Naive thymus-derived CD4-positive, alpha-beta T cell (primary cell): ENCODE measurements at regions of chr3 and their contacts with region 1.

Region 1: GRCh38 chr3:112734718-112735350 is 93.9 kb upstream of the CCDC80 start:
- DNase-seq: peak; percentile 14 to 76 (median 60)
- ATAC-seq: peak; percentile 82
- H3K4me3 ChIP-seq: no peak overlapping the region
- H3K4me3 Mint-ChIP-seq: peak overlapping the region in 1 of 10 donors; percentile 7
- H3K27ac ChIP-seq: no peak overlapping the region
- H3K27ac Mint-ChIP-seq: peak overlapping the region in 4 of 9 donors; percentile 8 to 76 (median 24)
- H3K4me1 ChIP-seq: peaks cover 25 to 44% of the 10 kb centered on the region in 2 donors
- H3K4me1 Mint-ChIP-seq: peaks cover 23 to 50% (median 46%) of the 10 kb centered on the region in 7 donors
- H3K27me3 ChIP-seq: no peaks in the 10 kb centered on the region
- H3K27me3 Mint-ChIP-seq: no peaks in the 10 kb centered on the region

Region 2: GRCh38 chr3:112582244-112582874 is 152.5 kb before region 1 on chr3:
- CTCF ChIA-PET with region 1: no interaction called
- POLR2A ChIA-PET with region 1: no interaction called
- intact Hi-C with region 1: loop called in 1 of 2 experiments (anchors 5 kb)
- DNase-seq: peak in 5 of 9 donors; percentile 8 to 39 (median 22)
- ATAC-seq: peak; percentile 60
- H3K4me3 ChIP-seq: no peak overlapping the region
- H3K4me3 Mint-ChIP-seq: no peak overlapping the region
- H3K27ac ChIP-seq: no peak overlapping the region
- H3K27ac Mint-ChIP-seq: no peak overlapping the region
- H3K4me1 ChIP-seq: no peaks in the 10 kb centered on the region
- H3K4me1 Mint-ChIP-seq: peaks cover 0 to 4% (median under 1%) of the 10 kb centered on the region in 7 donors
- H3K27me3 ChIP-seq: no peaks in the 10 kb centered on the region
- H3K27me3 Mint-ChIP-seq: no peaks in the 10 kb centered on the region

Region 3: DNA sequence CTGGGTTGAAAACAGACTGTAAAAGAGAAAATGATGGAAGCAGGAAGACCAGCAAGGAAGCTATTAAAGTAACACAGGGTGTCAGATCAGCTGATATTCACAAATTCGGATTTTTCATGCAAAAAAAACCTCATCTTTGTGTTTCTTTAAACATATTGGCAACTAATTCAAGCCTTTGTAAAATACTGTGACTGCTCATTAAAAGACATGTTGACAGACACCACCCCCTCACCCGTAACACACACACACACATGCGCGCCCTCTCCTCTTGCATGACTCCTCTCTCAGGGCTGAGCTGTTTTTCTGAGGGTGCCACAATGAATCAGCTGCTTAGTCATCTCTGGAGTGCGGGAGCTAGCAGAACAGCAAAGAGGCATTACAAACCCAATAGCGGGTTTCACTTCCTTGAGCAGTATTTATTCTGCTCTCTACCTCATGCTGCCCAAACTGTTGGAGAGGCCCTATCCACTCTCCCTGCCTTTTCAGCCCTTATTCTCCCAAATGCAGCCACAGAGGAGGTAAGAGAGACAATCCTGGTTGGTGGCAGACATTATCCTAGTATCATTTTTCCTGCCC is 58.1 kb before region 1 on chr3:
- CTCF ChIA-PET with region 1: no interaction called
- POLR2A ChIA-PET with region 1: no interaction called
- intact Hi-C with region 1: loop called in 1 of 2 experiments (anchors 2 kb)
- DNase-seq: peak in 7 of 9 donors; percentile 5 to 76 (median 30)
- ATAC-seq: peak; percentile 94
- H3K4me3 ChIP-seq: no peak overlapping the region
- H3K4me3 Mint-ChIP-seq: peak overlapping the region in 4 of 10 donors; percentile 11 to 80 (median 16)
- H3K27ac ChIP-seq: no peak overlapping the region
- H3K27ac Mint-ChIP-seq: peak overlapping the region in 5 of 9 donors; percentile 20 to 94 (median 24)
- H3K4me1 ChIP-seq: peaks cover 23 to 39% of the 10 kb centered on the region in 2 donors
- H3K4me1 Mint-ChIP-seq: peaks cover 30 to 69% (median 34%) of the 10 kb centered on the region in 7 donors
- H3K27me3 ChIP-seq: no peaks in the 10 kb centered on the region
- H3K27me3 Mint-ChIP-seq: no peaks in the 10 kb centered on the region

Region 4: GRCh38 chr3:112814266-112814665 is 79.4 kb after region 1 on chr3:
- CTCF ChIA-PET with region 1: interaction called, 51 read pairs
- POLR2A ChIA-PET with region 1: interaction called, 3 read pairs
- intact Hi-C with region 1: loop called (anchors 1 kb)
- DNase-seq: no peak
- ATAC-seq: no peak
- H3K4me3 ChIP-seq: no peak overlapping the region
- H3K4me3 Mint-ChIP-seq: no peak overlapping the region
- H3K27ac ChIP-seq: no peak overlapping the region
- H3K27ac Mint-ChIP-seq: no peak overlapping the region
- H3K4me1 ChIP-seq: no peaks in the 10 kb centered on the region
- H3K4me1 Mint-ChIP-seq: peaks cover 18 to 28% (median 23%) of the 10 kb centered on the region in 7 donors
- H3K27me3 ChIP-seq: no peaks in the 10 kb centered on the region
- H3K27me3 Mint-ChIP-seq: peaks cover 0 to 3% (median 0%) of the 10 kb centered on the region in 5 donors

Region 5: GRCh38 chr3:112973325-112974177 is 238.7 kb after region 1 on chr3:
- CTCF ChIA-PET with region 1: interaction called, 72 read pairs
- POLR2A ChIA-PET with region 1: interaction called, 11 read pairs
- intact Hi-C with region 1: no loop called
- DNase-seq: peak in 8 of 9 donors; percentile 31 to 64 (median 52)
- ATAC-seq: peak; percentile 87
- H3K4me3 ChIP-seq: peak overlapping the region; percentile 72
- H3K4me3 Mint-ChIP-seq: peak overlapping the region; percentile 83 to 98 (median 94)
- H3K27ac ChIP-seq: peak overlapping the region; percentile 80
- H3K27ac Mint-ChIP-seq: peak overlapping the region; percentile 86 to 97 (median 95)
- H3K4me1 ChIP-seq: peaks cover 28 to 43% of the 10 kb centered on the region in 2 donors
- H3K4me1 Mint-ChIP-seq: peaks cover 56 to 88% (median 74%) of the 10 kb centered on the region in 7 donors
- H3K27me3 ChIP-seq: no peaks in the 10 kb centered on the region
- H3K27me3 Mint-ChIP-seq: no peaks in the 10 kb centered on the region

Region 6: DNA sequence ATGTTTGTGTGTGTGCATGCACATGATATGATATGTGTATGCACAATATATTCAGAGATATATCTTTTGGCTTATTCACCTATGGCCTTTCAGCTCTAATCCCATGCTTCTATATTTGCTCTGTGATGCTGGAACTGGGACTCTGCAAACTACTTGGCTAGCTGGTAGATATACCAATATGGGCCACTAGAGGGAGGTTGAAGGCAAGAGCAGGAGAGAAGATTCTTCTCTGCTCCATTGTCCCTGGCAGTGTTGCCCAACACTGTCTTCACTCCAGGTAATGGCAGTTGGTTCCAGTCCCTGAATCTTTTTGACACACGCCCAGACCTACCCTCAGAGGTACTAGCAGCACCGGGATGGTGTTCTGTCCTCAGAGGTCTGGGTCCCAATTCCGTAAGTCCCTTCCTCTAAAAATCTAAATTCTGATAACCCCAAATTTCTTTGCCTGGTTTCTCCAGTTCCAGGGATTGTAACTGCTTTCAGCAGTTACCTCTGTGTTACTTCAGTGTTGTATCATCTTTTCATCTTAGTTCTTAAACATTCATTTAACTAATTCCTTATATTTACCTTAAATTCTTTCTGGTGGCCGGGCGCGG is 300.7 kb after region 1 on chr3:
- CTCF ChIA-PET with region 1: interaction called, 16 read pairs
- POLR2A ChIA-PET with region 1: no interaction called
- intact Hi-C with region 1: loop called in 1 of 2 experiments (anchors 2 kb)
- DNase-seq: peak in 6 of 9 donors; percentile 34 to 57 (median 44)
- ATAC-seq: peak; percentile 88
- H3K4me3 ChIP-seq: no peak overlapping the region
- H3K4me3 Mint-ChIP-seq: no peak overlapping the region
- H3K27ac ChIP-seq: no peak overlapping the region
- H3K27ac Mint-ChIP-seq: no peak overlapping the region
- H3K4me1 ChIP-seq: no peaks in the 10 kb centered on the region
- H3K4me1 Mint-ChIP-seq: peaks cover 0 to 5% (median 0%) of the 10 kb centered on the region in 7 donors
- H3K27me3 ChIP-seq: no peaks in the 10 kb centered on the region
- H3K27me3 Mint-ChIP-seq: no peaks in the 10 kb centered on the region

Region 7: GRCh38 chr3:113287803-113288648 is 553.2 kb after region 1 on chr3:
- CTCF ChIA-PET with region 1: interaction called, 13 read pairs
- POLR2A ChIA-PET with region 1: no interaction called
- intact Hi-C with region 1: loop called (anchors 1 to 10 kb)
- DNase-seq: peak in 6 of 9 donors; percentile 9 to 57 (median 40)
- ATAC-seq: peak; percentile 60
- H3K4me3 ChIP-seq: no peak overlapping the region
- H3K4me3 Mint-ChIP-seq: no peak overlapping the region
- H3K27ac ChIP-seq: no peak overlapping the region
- H3K27ac Mint-ChIP-seq: no peak overlapping the region
- H3K4me1 ChIP-seq: no peaks in the 10 kb centered on the region
- H3K4me1 Mint-ChIP-seq: peaks cover 0 to 4% (median 0%) of the 10 kb centered on the region in 7 donors
- H3K27me3 ChIP-seq: no peaks in the 10 kb centered on the region
- H3K27me3 Mint-ChIP-seq: no peaks in the 10 kb centered on the region